ENCODE measurements at regions of chr17 and their contacts with region 1.

Region 1: GRCh38 chr17:45794840-45795239 is 10.7 kb downstream of the CRHR1 start:
- DNase-seq: no peak
- ATAC-seq: peak in 1 of 8 donors; percentile 21
- H3K4me3 ChIP-seq: no peak overlapping the region
- H3K27ac ChIP-seq: no peak overlapping the region
- H3K4me1 ChIP-seq: no peaks in the 10 kb centered on the region
- H3K27me3 ChIP-seq: peaks cover 5 to 96% (median 77%) of the 10 kb centered on the region in 7 donors
- CTCF ChIP-seq: no peak

Region 2: GRCh38 chr17:45740553-45741330 is 54.1 kb before region 1 on chr17:
- intact Hi-C with region 1: no loop called
- DNase-seq: peak in 1 of 2 donors; percentile 47
- ATAC-seq: peak in 5 of 8 donors; percentile 61 to 88 (median 84)
- H3K4me3 ChIP-seq: no peak overlapping the region
- H3K27ac ChIP-seq: no peak overlapping the region
- H3K4me1 ChIP-seq: peaks cover 0 to 4% (median 0%) of the 10 kb centered on the region in 9 donors
- H3K27me3 ChIP-seq: peaks cover 0 to 45% (median 4%) of the 10 kb centered on the region in 7 donors
- CTCF ChIP-seq: no peak

Region 3: GRCh38 chr17:45852535-45853297 is 57.9 kb after region 1 on chr17:
- intact Hi-C with region 1: loop called in 1 of 10 experiments (anchors 10 kb)
- DNase-seq: peak in 1 of 2 donors; percentile 38
- ATAC-seq: no peak
- H3K4me3 ChIP-seq: no peak overlapping the region
- H3K27ac ChIP-seq: no peak overlapping the region
- H3K4me1 ChIP-seq: peaks cover 0 to 7% (median 0%) of the 10 kb centered on the region in 9 donors
- H3K27me3 ChIP-seq: peaks cover 0 to 37% (median 26%) of the 10 kb centered on the region in 7 donors
- CTCF ChIP-seq: peak; percentile 70 to 92 (median 87)

Region 4: GRCh38 chr17:46139432-46140210 is 344.8 kb after region 1 on chr17:
- intact Hi-C with region 1: no loop called
- DNase-seq: no peak
- ATAC-seq: peak in 2 of 8 donors; percentile 7 to 41
- H3K4me3 ChIP-seq: no peak overlapping the region
- H3K27ac ChIP-seq: peak overlapping the region in 1 of 10 donors; percentile 27
- H3K4me1 ChIP-seq: peaks cover 4 to 97% (median 85%) of the 10 kb centered on the region in 9 donors
- H3K27me3 ChIP-seq: no peaks in the 10 kb centered on the region
- CTCF ChIP-seq: no peak